ENCODE measurements at regions of chr9 and their contacts with region 1.

Region 1: DNA sequence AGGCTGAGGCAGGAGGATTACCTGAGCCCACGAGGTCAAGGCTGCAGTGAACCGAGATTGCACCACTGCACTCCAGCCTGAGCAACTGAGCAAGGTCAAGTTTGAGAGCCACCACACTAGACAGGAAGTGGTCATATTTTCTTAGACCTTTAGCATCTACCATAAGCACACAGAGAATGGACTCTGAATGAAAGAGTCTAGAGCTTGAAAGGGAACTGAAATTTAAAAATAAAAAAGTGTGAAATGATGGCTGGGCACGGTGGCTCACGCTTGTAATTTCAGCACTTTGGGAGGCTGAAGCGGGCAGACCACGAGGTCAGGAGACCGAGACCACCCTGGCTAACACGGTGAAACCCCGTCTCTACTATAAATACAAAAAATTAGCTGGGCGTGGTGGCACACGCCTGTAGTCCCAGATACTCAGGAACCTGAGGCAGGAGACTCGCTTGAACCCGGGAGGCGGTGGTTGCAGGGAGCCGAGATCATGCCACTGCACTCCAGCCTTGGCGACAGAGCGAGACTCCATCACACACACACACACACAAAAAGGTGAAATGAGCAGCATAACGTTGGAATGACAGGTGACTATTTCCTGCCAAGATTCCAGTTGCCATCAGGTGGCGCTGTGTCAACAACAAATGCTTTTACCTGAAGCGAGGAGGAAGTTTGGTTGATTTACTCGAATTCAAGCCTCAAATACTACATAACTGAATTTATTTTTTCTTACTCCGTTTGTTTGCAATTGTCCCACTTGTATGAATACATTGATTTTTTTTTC is 21.3 kb upstream of the AK3 start:
- DNase-seq: peak; percentile 76
- H3K4me3 ChIP-seq: peak overlapping the region in 1 of 3 experiments; percentile 34
- H3K27ac ChIP-seq: peak overlapping the region; percentile 39
- H3K4me1 ChIP-seq: peaks cover 13% of the 10 kb centered on the region
- H3K27me3 ChIP-seq: no peaks in the 10 kb centered on the region
- CTCF ChIP-seq: peak; percentile 73 to 74
- POLR2A ChIP-seq: no peak

Region 2: DNA sequence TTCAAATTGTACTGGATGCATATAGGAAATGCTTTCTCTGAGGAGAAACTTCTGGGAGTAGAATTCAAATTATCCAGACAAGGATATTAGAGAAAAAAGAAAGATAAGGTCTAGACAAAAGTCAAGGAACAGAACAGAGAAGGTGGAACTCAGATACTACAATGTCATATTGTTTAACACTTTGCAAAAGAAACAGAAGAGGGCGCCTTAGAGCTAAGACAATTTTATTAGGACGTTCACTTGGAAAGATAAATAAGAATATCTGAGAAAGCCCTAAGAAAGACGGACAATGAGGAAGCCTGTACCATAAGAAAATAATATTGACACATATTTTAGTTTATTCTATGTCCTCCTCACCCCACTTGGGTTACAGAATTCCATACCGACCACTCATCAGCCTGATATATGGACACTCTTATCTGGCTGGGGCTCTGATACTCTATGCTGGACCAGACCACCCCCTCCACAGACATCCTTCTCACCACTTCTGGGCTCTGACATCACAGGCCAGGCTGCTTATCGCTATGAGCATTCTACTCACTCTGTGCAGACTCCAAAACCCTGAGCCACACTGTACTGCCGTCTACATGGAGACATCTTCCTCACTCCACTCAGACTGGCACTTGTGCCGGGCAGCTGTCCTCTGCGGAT is 12.1 kb before region 1 on chr9:
- CTCF ChIA-PET with region 1: interaction called, 32 read pairs
- POLR2A ChIA-PET with region 1: no interaction called
- dilution Hi-C with region 1: no loop called
- intact Hi-C with region 1: no loop called
- DNase-seq: peak; percentile 57
- H3K4me3 ChIP-seq: no peak overlapping the region
- H3K27ac ChIP-seq: no peak overlapping the region
- H3K4me1 ChIP-seq: no peaks in the 10 kb centered on the region
- H3K27me3 ChIP-seq: no peaks in the 10 kb centered on the region
- CTCF ChIP-seq: peak; percentile 32 to 42
- POLR2A ChIP-seq: no peak

Region 3: GRCh38 chr9:4832786-4833579 is 70.7 kb after region 1 on chr9:
- CTCF ChIA-PET with region 1: interaction called, 9 read pairs
- POLR2A ChIA-PET with region 1: no interaction called
- dilution Hi-C with region 1: no loop called
- intact Hi-C with region 1: loop called (anchors 2 kb)
- DNase-seq: peak; percentile 98
- H3K4me3 ChIP-seq: peak overlapping the region in 1 of 3 experiments; percentile 44
- H3K27ac ChIP-seq: peak overlapping the region; percentile 99
- H3K4me1 ChIP-seq: peaks cover 46% of the 10 kb centered on the region
- H3K27me3 ChIP-seq: no peaks in the 10 kb centered on the region
- CTCF ChIP-seq: no peak
- POLR2A ChIP-seq: peak; percentile 41

Region 4: GRCh38 chr9:4923580-4924544 is 161.6 kb after region 1 on chr9:
- CTCF ChIA-PET with region 1: interaction called, 36 read pairs
- POLR2A ChIA-PET with region 1: no interaction called
- dilution Hi-C with region 1: no loop called
- intact Hi-C with region 1: loop called (anchors 1 kb)
- DNase-seq: peak; percentile 56
- H3K4me3 ChIP-seq: no peak overlapping the region
- H3K27ac ChIP-seq: no peak overlapping the region
- H3K4me1 ChIP-seq: no peaks in the 10 kb centered on the region
- H3K27me3 ChIP-seq: no peaks in the 10 kb centered on the region
- CTCF ChIP-seq: peak; percentile 19 to 41
- POLR2A ChIP-seq: no peak

Region 5: DNA sequence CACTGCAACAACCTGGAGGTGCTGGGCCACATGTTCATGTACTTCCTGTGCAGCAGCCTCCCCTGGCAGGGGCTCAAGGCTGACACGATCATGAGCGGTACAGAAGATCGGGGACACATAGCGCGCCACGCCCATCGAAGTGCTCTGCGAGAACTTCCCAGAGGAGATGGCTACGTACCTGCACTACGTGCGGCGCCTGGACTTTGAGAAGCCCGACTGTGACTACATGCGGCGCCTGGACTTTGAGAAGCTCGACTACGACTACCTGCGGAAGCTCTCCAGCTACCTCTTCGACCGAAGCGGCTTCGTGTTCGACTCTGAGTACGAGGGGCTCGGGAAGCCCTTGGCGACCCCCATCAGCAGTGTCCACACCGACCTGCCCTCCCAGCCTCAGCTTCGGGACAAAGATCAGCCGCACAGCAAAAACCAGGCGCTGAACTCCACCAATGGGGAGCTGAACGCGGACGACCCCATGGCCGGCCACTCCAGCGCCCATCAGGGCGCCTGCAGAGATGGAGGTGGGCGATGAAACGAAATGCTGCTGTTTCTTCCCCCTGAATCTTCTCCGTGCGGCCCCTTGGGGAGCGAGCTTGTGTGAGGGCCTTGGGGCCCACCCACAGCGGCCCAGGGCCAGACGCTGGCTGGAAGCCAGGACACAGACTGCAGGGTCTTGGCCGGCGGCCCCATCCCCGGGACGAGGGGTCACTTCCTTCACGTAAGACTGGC is 279.3 kb after region 1 on chr9:
- CTCF ChIA-PET with region 1: no interaction called
- POLR2A ChIA-PET with region 1: no interaction called
- dilution Hi-C with region 1: no loop called
- intact Hi-C with region 1: no loop called
- DNase-seq: no peak
- H3K4me3 ChIP-seq: no peak overlapping the region
- H3K27ac ChIP-seq: no peak overlapping the region
- H3K4me1 ChIP-seq: peaks cover 3% of the 10 kb centered on the region
- H3K27me3 ChIP-seq: no peaks in the 10 kb centered on the region
- CTCF ChIP-seq: no peak
- POLR2A ChIP-seq: no peak

Region 6: GRCh38 chr9:5186416-5187169 is 424.3 kb after region 1 on chr9:
- CTCF ChIA-PET with region 1: interaction called, 19 read pairs
- POLR2A ChIA-PET with region 1: no interaction called
- dilution Hi-C with region 1: no loop called
- intact Hi-C with region 1: loop called (anchors 1 kb)
- DNase-seq: peak; percentile 69
- H3K4me3 ChIP-seq: no peak overlapping the region
- H3K27ac ChIP-seq: no peak overlapping the region
- H3K4me1 ChIP-seq: no peaks in the 10 kb centered on the region
- H3K27me3 ChIP-seq: no peaks in the 10 kb centered on the region
- CTCF ChIP-seq: peak; percentile 64 to 73
- POLR2A ChIP-seq: no peak

Region 7: DNA sequence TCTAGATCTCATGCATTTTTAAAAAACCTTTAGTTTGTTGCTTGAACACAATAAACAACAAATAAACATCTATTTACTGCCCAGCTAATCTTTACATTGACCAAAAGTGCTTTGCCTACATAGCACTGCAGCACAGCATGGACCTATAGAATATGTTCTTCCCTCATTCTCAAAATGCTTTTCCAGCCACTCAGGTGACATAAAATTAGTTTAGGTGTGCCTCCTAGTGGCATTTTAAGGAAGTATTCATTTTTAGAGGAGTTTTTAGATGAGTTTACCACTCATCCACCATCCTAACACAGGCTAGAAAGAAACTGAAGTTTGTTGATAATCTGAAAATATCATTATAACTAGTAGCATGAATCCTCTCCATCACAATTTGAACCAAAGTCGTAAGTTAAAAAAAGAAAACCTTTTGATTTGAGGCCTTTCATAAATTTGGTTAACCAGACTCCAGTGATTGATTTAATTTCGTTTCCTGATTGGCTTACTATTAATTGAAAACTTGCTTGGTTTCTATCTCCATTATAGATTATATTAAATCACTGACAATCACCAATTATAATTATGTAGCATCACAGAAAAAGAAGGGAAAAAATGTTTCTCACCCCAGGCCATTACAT is 662.8 kb after region 1 on chr9:
- CTCF ChIA-PET with region 1: interaction called, 13 read pairs
- POLR2A ChIA-PET with region 1: no interaction called
- dilution Hi-C with region 1: no loop called
- intact Hi-C with region 1: loop called (anchors 1 kb)
- DNase-seq: peak; percentile 42
- H3K4me3 ChIP-seq: no peak overlapping the region
- H3K27ac ChIP-seq: no peak overlapping the region
- H3K4me1 ChIP-seq: no peaks in the 10 kb centered on the region
- H3K27me3 ChIP-seq: no peaks in the 10 kb centered on the region
- CTCF ChIP-seq: peak; percentile 20 to 32
- POLR2A ChIP-seq: no peak

Region 8: DNA sequence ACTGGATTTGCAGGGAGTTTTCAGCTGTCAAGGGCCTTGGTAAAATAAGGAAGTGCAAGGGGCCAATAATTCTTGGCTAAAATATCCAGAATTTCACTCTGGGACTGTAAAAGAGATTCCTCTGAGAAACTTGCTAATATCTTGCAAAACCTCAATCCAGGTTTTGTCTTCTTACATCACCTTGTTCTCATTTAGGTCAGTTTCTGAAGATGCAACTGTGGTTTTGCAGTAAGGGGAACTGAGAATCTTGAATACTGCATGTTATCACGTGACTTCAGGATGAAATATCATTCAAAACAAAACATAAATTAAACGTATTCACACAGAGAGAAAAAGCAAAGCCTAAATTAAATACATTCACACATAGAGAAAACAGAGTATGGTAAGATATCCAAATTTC is 831.6 kb after region 1 on chr9:
- CTCF ChIA-PET with region 1: interaction called, 60 read pairs
- POLR2A ChIA-PET with region 1: no interaction called
- dilution Hi-C with region 1: no loop called
- intact Hi-C with region 1: no loop called
- DNase-seq: no peak
- H3K4me3 ChIP-seq: no peak overlapping the region
- H3K27ac ChIP-seq: no peak overlapping the region
- H3K4me1 ChIP-seq: peaks cover 6% of the 10 kb centered on the region
- H3K27me3 ChIP-seq: no peaks in the 10 kb centered on the region
- CTCF ChIP-seq: no peak
- POLR2A ChIP-seq: no peak

Measured in endothelial cell of umbilical vein (primary cell).